ENCODE measurements at regions of chr20 and their contacts with region 1.

Region 1: GRCh38 chr20:62861726-62862336 is at the start of gene TCFL5:
- DNase-seq: peak; percentile 98
- H3K4me3 Mint-ChIP-seq: peak within 1 kb of the TSS; percentile 64
- H3K27ac Mint-ChIP-seq: peak within 1 kb of the TSS; percentile 42
- H3K4me1 Mint-ChIP-seq: peaks cover 10% of the 10 kb centered on the region
- H3K27me3 Mint-ChIP-seq: peaks cover 24% of the 10 kb centered on the region
- total RNA-seq, gene TCFL5: 5.8 and 6.2 TPM in 2 replicates

Region 2: GRCh38 chr20:62808211-62808865 is 53.5 kb before region 1 on chr20:
- intact Hi-C with region 1: loop called (anchors 5 kb)
- DNase-seq: peak; percentile 93
- H3K4me3 Mint-ChIP-seq: peak overlapping the region; percentile 45
- H3K27ac Mint-ChIP-seq: peak overlapping the region; percentile 72
- H3K4me1 Mint-ChIP-seq: peaks cover 20% of the 10 kb centered on the region
- H3K27me3 Mint-ChIP-seq: no peaks in the 10 kb centered on the region

Region 3: DNA sequence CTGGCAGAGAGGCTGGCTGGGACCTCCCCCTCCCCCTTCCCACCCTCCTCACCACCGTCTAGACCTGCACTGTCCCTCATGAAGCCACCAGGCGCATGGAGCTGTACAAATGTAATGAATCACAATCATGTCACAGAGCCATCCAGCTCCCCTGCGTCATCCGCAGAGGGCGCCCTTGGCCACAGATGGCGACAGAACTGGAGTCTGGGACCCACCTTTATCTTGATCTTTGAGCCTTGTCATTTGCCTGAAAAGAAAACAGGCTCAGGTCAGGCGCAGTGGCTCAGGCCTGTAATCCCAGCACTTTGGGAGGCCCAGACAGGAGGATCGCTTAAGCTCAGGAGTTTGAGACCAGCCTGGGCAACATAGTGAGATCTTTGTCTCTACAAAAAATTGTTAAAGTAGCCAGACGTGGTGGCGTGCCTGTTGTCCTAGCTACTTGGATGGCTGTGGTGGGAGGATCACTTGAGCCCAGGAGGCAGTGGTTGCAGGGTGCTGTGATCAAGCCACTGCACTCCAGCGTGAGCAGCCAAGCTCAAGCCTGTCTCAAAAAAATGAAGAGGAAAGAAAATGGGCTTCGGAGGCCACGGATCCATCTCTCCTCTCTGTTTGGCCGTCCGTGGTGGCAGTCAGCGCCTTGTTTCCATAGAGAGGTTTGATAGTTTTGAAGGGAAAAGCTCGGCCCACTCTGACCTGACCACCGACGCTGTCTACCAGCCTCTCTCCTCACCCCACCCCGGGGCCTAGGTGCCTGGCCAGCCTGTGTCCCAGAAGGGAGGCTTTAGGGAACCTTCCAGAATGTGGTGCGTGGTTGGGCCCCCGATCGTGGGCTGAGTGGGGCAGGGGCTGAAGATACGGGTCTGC is 38.8 kb before region 1 on chr20:
- intact Hi-C with region 1: loop called (anchors 5 kb)
- DNase-seq: peak; percentile 84
- H3K4me3 Mint-ChIP-seq: no peak overlapping the region
- H3K27ac Mint-ChIP-seq: no peak overlapping the region
- H3K4me1 Mint-ChIP-seq: no peaks in the 10 kb centered on the region
- H3K27me3 Mint-ChIP-seq: peaks cover 4% of the 10 kb centered on the region

Region 4: GRCh38 chr20:63082301-63082805 is 220.5 kb after region 1 on chr20:
- intact Hi-C with region 1: no loop called
- DNase-seq: peak; percentile 86
- H3K4me3 Mint-ChIP-seq: no peak overlapping the region
- H3K27ac Mint-ChIP-seq: no peak overlapping the region
- H3K4me1 Mint-ChIP-seq: no peaks in the 10 kb centered on the region
- H3K27me3 Mint-ChIP-seq: no peaks in the 10 kb centered on the region

Region 5: DNA sequence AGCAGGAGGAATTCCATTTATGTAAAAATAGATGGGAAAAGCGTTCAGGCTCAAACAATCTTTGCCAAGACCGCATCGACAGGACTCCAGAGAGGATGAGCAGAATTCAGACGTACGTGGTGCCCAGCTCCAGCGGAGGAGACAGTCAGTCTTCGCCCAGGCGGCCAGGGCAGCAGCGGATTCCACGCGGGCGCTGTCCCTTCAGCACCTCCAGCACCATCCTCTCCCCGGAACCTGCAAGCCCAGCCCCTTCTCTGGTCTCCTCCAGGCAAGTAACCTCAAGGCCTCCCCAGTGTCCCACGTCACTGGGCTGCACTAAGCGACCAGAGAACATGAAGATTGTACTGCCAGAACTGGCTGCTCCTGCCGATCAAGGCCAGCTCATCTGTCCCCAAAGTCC is 613.4 kb after region 1 on chr20:
- intact Hi-C with region 1: no loop called
- DNase-seq: peak; percentile 71
- H3K4me3 Mint-ChIP-seq: no peak overlapping the region
- H3K27ac Mint-ChIP-seq: no peak overlapping the region
- H3K4me1 Mint-ChIP-seq: no peaks in the 10 kb centered on the region
- H3K27me3 Mint-ChIP-seq: peaks cover 32% of the 10 kb centered on the region